ENCODE measurements at regions of chr9 and their contacts with region 1.

Region 1: GRCh38 chr9:92481040-92481633 is 1.2 kb downstream of the ASPN start:
- DNase-seq: no peak
- ATAC-seq: peak in 4 of 8 donors; percentile 8 to 63 (median 56)
- H3K4me3 ChIP-seq: peak overlapping the region in 9 of 10 donors; percentile 2 to 50 (median 34)
- H3K27ac ChIP-seq: peak overlapping the region; percentile 31 to 89 (median 66)
- H3K4me1 ChIP-seq: peaks cover 3 to 65% (median 38%) of the 10 kb centered on the region in 9 donors
- H3K27me3 ChIP-seq: no peaks in the 10 kb centered on the region
- CTCF ChIP-seq: no peak

Region 2: DNA sequence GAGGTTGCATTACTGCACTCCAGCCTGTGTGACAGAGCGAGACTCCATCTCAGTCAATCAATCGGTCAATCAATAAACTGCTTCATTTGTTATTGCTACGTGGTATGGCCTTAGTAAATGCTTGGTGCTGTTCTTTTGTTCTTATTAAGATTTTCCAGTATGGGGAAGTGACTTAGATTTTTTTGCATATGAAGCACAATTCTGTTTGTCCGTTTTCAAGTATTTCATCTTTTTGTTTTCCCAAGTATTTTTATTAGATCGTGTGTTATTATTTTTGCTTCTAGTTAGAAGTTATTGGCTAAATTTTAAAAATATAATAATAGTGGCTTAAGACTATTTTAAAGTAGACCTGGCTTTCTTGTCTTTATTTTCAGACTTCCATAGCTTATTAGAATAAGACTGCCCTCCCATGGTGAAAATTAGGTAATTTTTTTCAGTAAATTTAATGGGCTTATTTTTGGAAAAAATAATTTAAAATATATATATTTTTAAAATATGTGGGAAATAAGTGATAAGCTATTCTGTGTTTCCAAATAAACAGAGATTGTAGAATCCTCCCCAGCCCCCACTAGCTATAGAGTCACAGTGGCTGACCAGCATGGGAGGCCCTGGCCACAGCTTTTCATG is 42.1 kb before region 1 on chr9:
- intact Hi-C with region 1: loop called in 1 of 10 experiments (anchors 10 kb)
- DNase-seq: no peak
- ATAC-seq: no peak
- H3K4me3 ChIP-seq: no peak overlapping the region
- H3K27ac ChIP-seq: no peak overlapping the region
- H3K4me1 ChIP-seq: no peaks in the 10 kb centered on the region
- H3K27me3 ChIP-seq: no peaks in the 10 kb centered on the region
- CTCF ChIP-seq: peak in 7 of 9 donors; percentile 27 to 60 (median 48)

Region 3: GRCh38 chr9:92522983-92523970 is 42.1 kb after region 1 on chr9:
- intact Hi-C with region 1: loop called in 1 of 10 experiments (anchors 2 kb)
- DNase-seq: no peak
- ATAC-seq: no peak
- H3K4me3 ChIP-seq: no peak overlapping the region
- H3K27ac ChIP-seq: peak overlapping the region in 1 of 10 donors; percentile 14
- H3K4me1 ChIP-seq: peaks cover 0 to 24% (median 5%) of the 10 kb centered on the region in 9 donors
- H3K27me3 ChIP-seq: no peaks in the 10 kb centered on the region
- CTCF ChIP-seq: no peak

Region 4: DNA sequence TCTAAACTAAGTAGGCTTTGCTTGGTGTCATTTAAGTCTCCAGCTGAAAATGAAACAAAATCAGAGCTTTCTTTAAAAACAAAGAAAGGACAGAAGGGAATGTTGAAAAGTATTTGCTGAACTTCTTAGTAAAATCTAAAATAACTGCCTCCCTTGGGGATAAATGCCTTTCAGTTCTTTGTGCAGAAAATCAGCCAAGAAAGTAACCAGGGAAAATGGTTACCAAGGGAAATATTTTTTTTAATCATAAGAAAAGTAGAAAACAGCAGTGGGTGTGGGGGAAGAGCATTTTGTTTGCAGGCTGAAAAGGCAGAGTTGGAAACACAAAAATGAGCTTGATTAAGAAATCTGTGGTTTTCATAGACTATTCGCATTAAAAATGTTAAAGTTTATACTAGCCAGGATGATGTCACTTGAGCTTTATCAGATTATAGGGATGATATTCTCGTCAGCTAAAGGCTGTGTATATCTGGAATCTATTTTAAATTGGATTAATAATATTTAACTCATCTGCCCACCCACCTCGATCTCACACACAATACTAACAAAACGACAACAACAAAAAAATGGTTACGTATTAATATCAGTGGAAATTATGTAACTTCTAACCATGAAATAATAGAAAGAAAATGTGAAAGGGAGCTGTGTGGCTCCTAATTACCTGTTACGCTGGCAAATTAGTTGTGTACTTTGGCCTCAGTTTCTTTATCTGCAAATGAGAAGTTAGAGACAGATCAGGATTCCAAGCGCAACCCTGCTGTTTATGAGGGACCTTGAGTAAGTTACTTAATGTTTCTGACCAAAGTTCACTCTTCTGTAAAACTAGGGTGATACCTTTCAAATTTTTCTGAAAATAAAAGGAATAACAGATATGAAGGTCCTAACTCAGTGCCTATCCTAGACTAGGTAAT is 55.1 kb after region 1 on chr9 and contains the start of gene ECM2:
- intact Hi-C with region 1: loop called in 1 of 10 experiments (anchors 5 kb)
- DNase-seq: peak in 1 of 2 donors; percentile 20
- ATAC-seq: peak in 7 of 8 donors; percentile 27 to 84 (median 76)
- H3K4me3 ChIP-seq: peak within 1 kb of the TSS in 8 of 10 donors; percentile 26 to 54 (median 38)
- H3K27ac ChIP-seq: peak within 1 kb of the TSS; percentile 40 to 86 (median 68)
- H3K4me1 ChIP-seq: peaks cover 0 to 42% (median 16%) of the 10 kb centered on the region in 9 donors
- H3K27me3 ChIP-seq: no peaks in the 10 kb centered on the region
- CTCF ChIP-seq: no peak
- total RNA-seq, gene ECM2: 4.2 to 14.9 (median 9.2) TPM

Region 5: DNA sequence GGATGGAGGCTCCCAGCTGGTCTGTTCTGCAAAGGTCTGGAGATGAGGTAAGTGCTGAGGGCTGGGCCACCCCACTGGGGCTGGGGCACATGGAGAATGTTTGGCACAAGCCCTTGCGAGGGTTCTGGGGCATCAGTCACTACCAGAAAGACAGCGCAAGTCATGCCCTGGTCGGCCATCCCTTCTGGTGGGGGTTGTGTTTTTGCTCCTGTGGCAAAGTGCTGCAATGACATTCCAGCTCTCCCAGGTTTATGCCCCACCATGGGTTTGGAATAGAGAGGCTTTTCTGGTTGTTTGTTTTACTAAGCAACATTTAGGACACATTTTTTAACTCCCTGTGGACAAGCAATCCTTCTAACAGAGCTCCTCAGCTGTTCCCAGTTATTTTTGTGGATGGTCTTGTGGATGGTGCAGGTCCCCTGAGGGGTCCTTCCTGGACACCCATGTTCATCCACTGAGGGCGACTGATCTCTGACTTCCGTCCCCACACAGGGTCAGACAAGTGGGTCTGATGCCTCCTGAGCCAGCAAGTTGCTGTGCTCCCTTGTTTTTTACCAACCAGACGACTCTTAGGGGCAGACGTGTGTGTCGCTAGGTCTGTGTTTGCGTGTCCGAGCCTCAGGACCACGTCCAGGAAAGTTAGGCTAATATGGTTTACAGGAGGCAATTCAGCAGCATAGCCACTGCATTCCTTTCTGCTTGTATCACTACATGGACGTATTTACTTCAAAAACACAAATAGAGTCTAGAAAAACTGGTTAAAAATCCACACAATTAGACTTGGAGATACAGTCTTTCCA is 119.5 kb after region 1 on chr9:
- intact Hi-C with region 1: loop called in 1 of 10 experiments (anchors 5 kb)
- DNase-seq: no peak
- ATAC-seq: peak; percentile 60 to 84 (median 72)
- H3K4me3 ChIP-seq: no peak overlapping the region
- H3K27ac ChIP-seq: peak overlapping the region; percentile 53 to 93 (median 78)
- H3K4me1 ChIP-seq: peaks cover 4 to 58% (median 39%) of the 10 kb centered on the region in 9 donors
- H3K27me3 ChIP-seq: no peaks in the 10 kb centered on the region
- CTCF ChIP-seq: no peak

Region 6: DNA sequence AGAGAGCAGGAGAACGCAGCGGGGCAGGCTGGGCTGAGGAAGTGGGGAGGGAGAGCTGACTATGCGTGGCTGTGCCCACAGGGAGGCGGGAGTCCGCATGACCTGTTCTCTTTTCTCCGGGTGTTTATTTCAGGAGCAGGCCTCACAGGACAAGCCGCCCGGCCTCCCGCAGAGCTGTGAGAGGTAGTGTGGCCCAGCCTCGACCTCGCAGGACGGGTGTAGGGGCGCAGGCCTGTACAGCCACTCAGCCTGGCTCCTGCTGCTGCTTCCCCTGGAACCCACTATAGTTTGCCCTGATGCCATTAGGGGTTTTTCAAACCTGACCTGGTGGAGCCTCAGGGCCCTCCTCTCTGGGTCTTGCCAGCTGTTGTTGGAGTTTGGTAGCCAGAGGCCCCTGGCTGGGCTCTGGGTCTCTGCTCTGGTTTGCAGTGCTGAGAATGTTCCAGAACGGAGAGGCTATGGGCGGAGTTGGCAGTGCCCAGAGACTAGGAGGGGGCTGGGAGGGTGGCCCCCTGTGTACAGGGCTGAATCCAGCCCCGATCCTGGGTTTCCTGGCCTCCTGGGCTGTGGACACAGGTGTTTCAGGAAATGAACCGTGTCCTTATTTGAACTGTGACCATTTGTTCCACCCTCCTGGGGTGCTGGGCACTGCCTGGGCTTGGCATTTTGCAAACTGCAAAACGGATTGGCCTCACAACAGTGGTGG is 781.6 kb after region 1 on chr9:
- intact Hi-C with region 1: no loop called
- DNase-seq: peak in 1 of 2 donors; percentile 23
- ATAC-seq: peak; percentile 29 to 84 (median 54)
- H3K4me3 ChIP-seq: no peak overlapping the region
- H3K27ac ChIP-seq: peak overlapping the region in 6 of 10 donors; percentile 27 to 52 (median 38)
- H3K4me1 ChIP-seq: peaks cover 0 to 35% (median 12%) of the 10 kb centered on the region in 9 donors
- H3K27me3 ChIP-seq: peaks cover 0 to 3% (median 0%) of the 10 kb centered on the region in 7 donors
- CTCF ChIP-seq: peak in 1 of 9 donors; percentile 25

Measured in heart right ventricle (tissue), 16 donors.